Activated CD4-positive, alpha-beta T cell treated with anti-CD3 and anti-CD28 coated beads, Interleukin-2, amount 10 ng/mL, durations not matched to agents 24 days and 14 days (primary cell): ENCODE measurements at regions of chr1 and their contacts with region 1.

Region 1: GRCh38 chr1:28449904-28450303 is 55.9 kb upstream of the RCC1 start:
- DNase-seq: peak; percentile 87
- H3K4me3 Mint-ChIP-seq: peak overlapping the region; percentile 49
- H3K27ac Mint-ChIP-seq: peak overlapping the region; percentile 85
- H3K4me1 Mint-ChIP-seq: peaks cover 26% of the 10 kb centered on the region
- H3K27me3 Mint-ChIP-seq: no peaks in the 10 kb centered on the region

Region 2: GRCh38 chr1:27136998-27137542 is 1312.8 kb before region 1 on chr1:
- intact Hi-C with region 1: loop called (anchors 10 kb)
- DNase-seq: peak; percentile 93
- H3K4me3 Mint-ChIP-seq: peak overlapping the region; percentile 82
- H3K27ac Mint-ChIP-seq: peak overlapping the region; percentile 100
- H3K4me1 Mint-ChIP-seq: peaks cover 49% of the 10 kb centered on the region
- H3K27me3 Mint-ChIP-seq: no peaks in the 10 kb centered on the region

Region 3: DNA sequence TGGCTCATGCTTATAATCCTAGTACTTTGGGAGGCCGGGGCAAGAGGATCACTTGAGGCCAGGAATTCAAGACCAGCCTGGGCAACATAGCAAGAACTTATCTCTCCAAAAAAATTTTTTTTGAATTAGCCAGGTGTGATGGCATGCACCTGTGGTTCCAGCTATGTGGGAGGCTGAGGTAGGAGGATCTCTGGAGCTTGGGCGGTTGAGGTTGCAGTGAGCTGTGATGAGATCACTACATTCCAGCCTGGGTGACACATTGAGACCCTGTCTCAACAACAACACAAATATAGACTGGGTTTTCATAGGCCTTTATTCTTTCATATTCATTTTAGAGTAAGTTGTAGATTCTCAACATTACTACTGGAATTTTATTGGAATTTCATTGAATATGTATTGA is 108.3 kb before region 1 on chr1:
- intact Hi-C with region 1: no loop called
- DNase-seq: no peak
- H3K4me3 Mint-ChIP-seq: no peak overlapping the region
- H3K27ac Mint-ChIP-seq: no peak overlapping the region
- H3K4me1 Mint-ChIP-seq: peaks cover 4% of the 10 kb centered on the region
- H3K27me3 Mint-ChIP-seq: no peaks in the 10 kb centered on the region

Region 4: GRCh38 chr1:28439320-28439719 is 10.6 kb before region 1 on chr1:
- intact Hi-C with region 1: loop called (anchors 1 kb)
- DNase-seq: no peak
- H3K4me3 Mint-ChIP-seq: no peak overlapping the region
- H3K27ac Mint-ChIP-seq: no peak overlapping the region
- H3K4me1 Mint-ChIP-seq: peaks cover 24% of the 10 kb centered on the region
- H3K27me3 Mint-ChIP-seq: no peaks in the 10 kb centered on the region

Region 5: DNA sequence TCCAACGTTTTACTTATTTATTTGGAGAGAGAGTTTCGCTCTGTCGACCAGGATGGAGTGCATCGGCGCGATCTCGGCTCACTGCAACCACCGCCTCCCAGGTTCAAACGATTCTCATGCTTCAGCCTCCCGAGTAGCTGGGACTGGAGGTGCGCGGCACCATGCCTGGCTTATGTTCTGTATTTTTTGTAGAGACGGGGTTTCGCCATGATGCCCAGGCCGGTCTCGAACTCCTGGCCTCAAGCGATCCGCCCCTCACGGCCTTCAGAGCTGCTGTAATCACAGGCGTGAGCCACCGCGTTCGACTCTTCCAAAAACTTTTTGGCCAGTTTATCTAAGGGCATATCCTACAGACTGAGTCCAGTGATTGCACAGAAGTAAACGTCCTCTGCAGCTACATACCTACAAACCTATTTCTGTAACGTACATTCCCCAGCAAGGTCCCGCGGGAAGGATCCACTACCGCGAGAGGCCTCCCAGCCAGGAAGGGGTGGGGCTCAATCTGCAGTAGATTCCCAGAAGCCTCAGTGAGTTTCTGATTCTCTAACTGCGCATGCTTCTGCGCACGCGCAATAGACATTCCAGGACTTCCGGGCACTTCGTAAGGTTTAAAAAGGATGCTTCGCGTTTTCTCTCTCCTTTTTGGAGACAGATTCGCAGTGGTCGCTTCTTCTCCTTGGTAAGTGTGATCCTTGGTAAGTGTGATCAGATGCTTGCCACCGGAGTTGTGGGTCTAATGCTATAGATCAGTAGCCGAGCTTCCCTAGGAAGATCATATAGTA is 55.7 kb after region 1 on chr1 and contains the start of gene RCC1:
- intact Hi-C with region 1: loop called (anchors 5 kb)
- DNase-seq: peak; percentile 99
- H3K4me3 Mint-ChIP-seq: peak within 1 kb of the TSS; percentile 92
- H3K27ac Mint-ChIP-seq: peak within 1 kb of the TSS; percentile 99
- H3K4me1 Mint-ChIP-seq: peaks cover 29% of the 10 kb centered on the region
- H3K27me3 Mint-ChIP-seq: peaks cover 2% of the 10 kb centered on the region
- total RNA-seq, gene RCC1: 143 and 145 TPM in 2 replicates

Region 6: GRCh38 chr1:28926629-28927265 is 476.8 kb after region 1 on chr1:
- intact Hi-C with region 1: loop called (anchors 5 kb)
- DNase-seq: peak; percentile 89
- H3K4me3 Mint-ChIP-seq: peak overlapping the region; percentile 73
- H3K27ac Mint-ChIP-seq: peak overlapping the region; percentile 89
- H3K4me1 Mint-ChIP-seq: peaks cover 41% of the 10 kb centered on the region
- H3K27me3 Mint-ChIP-seq: no peaks in the 10 kb centered on the region

Region 7: DNA sequence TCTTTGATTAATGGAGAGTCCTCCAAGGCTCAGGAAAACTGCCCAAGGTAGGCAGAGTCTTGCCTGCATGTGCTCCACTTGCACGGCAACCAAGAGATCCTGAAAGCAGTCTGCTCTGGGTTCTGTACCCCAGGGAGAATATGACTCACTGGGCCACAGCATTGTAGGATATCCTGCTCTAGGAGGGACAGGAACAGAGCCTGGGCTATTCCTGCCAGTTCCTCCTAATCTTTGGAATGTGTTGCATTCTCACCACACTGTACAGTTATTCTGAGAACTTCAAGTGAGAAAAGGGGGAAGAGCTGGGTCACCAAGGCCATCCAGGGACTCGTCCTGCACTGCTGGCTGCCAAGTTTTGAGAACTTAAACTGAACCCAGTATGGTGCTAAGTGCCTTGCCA is 1994.9 kb after region 1 on chr1:
- intact Hi-C with region 1: no loop called
- DNase-seq: peak; percentile 28
- H3K4me3 Mint-ChIP-seq: no peak overlapping the region
- H3K27ac Mint-ChIP-seq: no peak overlapping the region
- H3K4me1 Mint-ChIP-seq: no peaks in the 10 kb centered on the region
- H3K27me3 Mint-ChIP-seq: no peaks in the 10 kb centered on the region